CD4-positive, alpha-beta T cell (primary cell): ENCODE measurements at regions of chrX and their contacts with region 1.

Region 1: DNA sequence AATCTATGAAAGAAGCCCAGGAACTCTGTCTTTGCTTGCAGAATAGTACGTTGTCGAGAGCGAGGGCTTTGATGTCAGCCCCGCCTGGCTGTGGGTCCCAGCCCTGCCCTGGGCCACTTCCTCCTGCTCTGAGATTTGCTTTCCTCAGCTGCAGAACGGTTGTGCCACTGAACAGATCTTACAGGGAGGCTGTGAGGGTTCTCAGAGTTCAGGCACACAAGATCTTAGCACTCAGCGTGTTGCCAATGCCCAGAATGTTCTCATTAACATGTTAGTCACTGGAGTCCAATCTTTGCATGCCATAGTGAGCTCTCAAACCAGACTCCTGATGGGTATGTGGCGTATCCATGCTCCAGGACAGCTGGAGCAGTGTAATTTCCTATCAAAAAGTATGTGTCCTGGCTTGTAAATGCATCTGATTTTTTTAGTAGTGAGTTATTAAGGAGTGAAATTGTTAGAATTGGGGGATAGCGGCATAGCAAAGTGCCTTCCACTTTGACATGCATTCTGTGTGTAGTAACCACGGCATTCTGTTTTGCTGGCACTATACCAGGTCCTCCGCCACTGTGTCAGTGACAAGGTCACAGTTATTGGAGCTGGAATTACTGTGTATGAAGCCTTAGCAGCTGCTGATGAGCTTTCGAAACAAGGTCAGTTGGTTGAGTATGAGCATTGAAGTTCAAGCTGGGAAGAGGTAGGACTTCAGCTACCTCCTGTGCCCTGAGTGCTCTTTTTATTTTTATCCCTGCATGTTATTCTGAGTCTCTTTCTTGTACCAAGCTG is 31.6 kb downstream of the TKTL1 start:
- DNase-seq: peak in 13 of 14 experiments; percentile 31 to 72 (median 59)
- ATAC-seq: peak; percentile 96
- H3K4me3 ChIP-seq: peak overlapping the region; percentile 24
- H3K4me3 Mint-ChIP-seq: peak overlapping the region; percentile 84
- H3K27ac ChIP-seq: peak overlapping the region; percentile 27 to 52
- H3K27ac Mint-ChIP-seq: peak overlapping the region; percentile 87
- H3K4me1 ChIP-seq: peaks cover 49% of the 10 kb centered on the region
- H3K4me1 Mint-ChIP-seq: peaks cover 48% of the 10 kb centered on the region
- H3K27me3 ChIP-seq: no peaks in the 10 kb centered on the region
- H3K27me3 Mint-ChIP-seq: no peaks in the 10 kb centered on the region
- CTCF ChIP-seq: no peak

Region 2: DNA sequence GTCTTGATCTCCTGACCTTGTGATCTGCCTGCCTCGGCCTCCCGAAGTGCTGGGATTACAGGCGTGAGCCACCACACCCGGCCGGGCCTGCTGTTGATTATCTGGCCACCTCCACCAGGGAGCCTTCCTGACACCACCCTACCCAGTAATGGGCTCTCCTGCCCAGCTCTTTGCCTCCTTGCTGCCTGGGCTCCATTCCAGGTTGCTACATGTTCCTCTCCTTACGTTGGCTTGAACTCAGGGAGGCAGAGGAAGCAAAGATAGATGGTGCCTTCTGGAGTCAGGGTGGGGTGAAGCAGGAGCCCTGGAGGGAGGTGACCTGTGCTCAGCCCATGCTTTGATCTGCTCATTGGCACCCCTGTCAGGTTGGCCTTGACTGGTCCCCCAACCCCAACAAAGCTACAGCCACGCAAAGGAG is 20.9 kb after region 1 on chrX:
- CTCF ChIA-PET with region 1: no interaction called
- POLR2A ChIA-PET with region 1: no interaction called
- intact Hi-C with region 1: no loop called
- DNase-seq: peak in 1 of 14 experiments; percentile 31
- ATAC-seq: no peak
- H3K4me3 ChIP-seq: no peak overlapping the region
- H3K4me3 Mint-ChIP-seq: no peak overlapping the region
- H3K27ac ChIP-seq: peak overlapping the region in 1 of 2 donors; percentile 47
- H3K27ac Mint-ChIP-seq: peak overlapping the region; percentile 85
- H3K4me1 ChIP-seq: peaks cover 60% of the 10 kb centered on the region
- H3K4me1 Mint-ChIP-seq: peaks cover 27% of the 10 kb centered on the region
- H3K27me3 ChIP-seq: no peaks in the 10 kb centered on the region
- H3K27me3 Mint-ChIP-seq: no peaks in the 10 kb centered on the region
- CTCF ChIP-seq: no peak

Region 3: GRCh38 chrX:154378782-154379591 is 51.8 kb after region 1 on chrX and contains the start of gene EMD:
- CTCF ChIA-PET with region 1: no interaction called
- POLR2A ChIA-PET with region 1: interaction called, 11 read pairs
- intact Hi-C with region 1: loop called in 1 of 2 experiments (anchors 5 kb)
- DNase-seq: peak; percentile 90 to 98 (median 96)
- ATAC-seq: peak; percentile 78
- H3K4me3 ChIP-seq: peak within 1 kb of the TSS; percentile 77
- H3K4me3 Mint-ChIP-seq: peak within 1 kb of the TSS; percentile 93
- H3K27ac ChIP-seq: peak within 1 kb of the TSS; percentile 92 to 96
- H3K27ac Mint-ChIP-seq: peak within 1 kb of the TSS; percentile 94
- H3K4me1 ChIP-seq: peaks cover 47% of the 10 kb centered on the region
- H3K4me1 Mint-ChIP-seq: peaks cover 5% of the 10 kb centered on the region
- H3K27me3 ChIP-seq: no peaks in the 10 kb centered on the region
- H3K27me3 Mint-ChIP-seq: no peaks in the 10 kb centered on the region
- CTCF ChIP-seq: no peak
- total RNA-seq, gene EMD: 164 to 178 TPM